ENCODE measurements at regions of chr9 and their contacts with region 1.

Region 1: GRCh38 chr9:33320568-33321261 is 30.4 kb downstream of the NFX1 start:
- DNase-seq: no peak
- ATAC-seq: no peak
- H3K4me3 ChIP-seq: no peak overlapping the region
- H3K4me3 Mint-ChIP-seq: no peak overlapping the region
- H3K27ac ChIP-seq: no peak overlapping the region
- H3K27ac Mint-ChIP-seq: peak overlapping the region; percentile 27
- H3K4me1 ChIP-seq: no peaks in the 10 kb centered on the region
- H3K4me1 Mint-ChIP-seq: no peaks in the 10 kb centered on the region
- H3K27me3 ChIP-seq: no peaks in the 10 kb centered on the region
- H3K27me3 Mint-ChIP-seq: no peaks in the 10 kb centered on the region
- CTCF ChIP-seq: no peak

Region 2: GRCh38 chr9:33249087-33249657 is 71.5 kb before region 1 on chr9:
- CTCF ChIA-PET with region 1: no interaction called
- POLR2A ChIA-PET with region 1: no interaction called
- intact Hi-C with region 1: no loop called
- DNase-seq: peak in 1 of 9 experiments; percentile 19
- ATAC-seq: no peak
- H3K4me3 ChIP-seq: no peak overlapping the region
- H3K4me3 Mint-ChIP-seq: no peak overlapping the region
- H3K27ac ChIP-seq: no peak overlapping the region
- H3K27ac Mint-ChIP-seq: no peak overlapping the region
- H3K4me1 ChIP-seq: no peaks in the 10 kb centered on the region
- H3K4me1 Mint-ChIP-seq: no peaks in the 10 kb centered on the region
- H3K27me3 ChIP-seq: no peaks in the 10 kb centered on the region
- H3K27me3 Mint-ChIP-seq: no peaks in the 10 kb centered on the region
- CTCF ChIP-seq: no peak

Region 3: DNA sequence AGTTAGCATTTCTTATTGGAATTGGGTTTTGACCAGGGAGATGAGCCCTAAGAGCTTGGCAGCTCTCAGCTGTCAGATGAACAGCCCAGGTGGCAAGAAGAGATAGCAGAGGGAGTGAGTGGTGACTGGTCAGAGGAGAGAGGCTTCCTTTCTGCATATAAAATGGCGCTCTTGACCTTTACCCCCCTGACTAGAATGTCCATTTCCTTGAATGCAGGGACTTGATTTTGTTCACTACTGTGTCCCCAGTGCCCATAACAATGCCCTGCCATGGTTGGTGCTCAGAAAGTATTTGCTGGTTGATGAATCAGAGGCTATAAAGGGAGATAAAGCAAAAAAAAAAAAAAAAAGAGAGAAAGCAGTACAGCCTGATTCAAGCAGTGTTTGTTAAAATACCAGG is 48.7 kb before region 1 on chr9:
- CTCF ChIA-PET with region 1: no interaction called
- POLR2A ChIA-PET with region 1: no interaction called
- intact Hi-C with region 1: loop called in 1 of 2 experiments (anchors 10 kb)
- DNase-seq: no peak
- ATAC-seq: no peak
- H3K4me3 ChIP-seq: no peak overlapping the region
- H3K4me3 Mint-ChIP-seq: no peak overlapping the region
- H3K27ac ChIP-seq: no peak overlapping the region
- H3K27ac Mint-ChIP-seq: peak overlapping the region; percentile 5
- H3K4me1 ChIP-seq: no peaks in the 10 kb centered on the region
- H3K4me1 Mint-ChIP-seq: peaks cover 22% of the 10 kb centered on the region
- H3K27me3 ChIP-seq: no peaks in the 10 kb centered on the region
- H3K27me3 Mint-ChIP-seq: no peaks in the 10 kb centered on the region
- CTCF ChIP-seq: no peak

Region 4: GRCh38 chr9:33350310-33350709 is 29.6 kb after region 1 on chr9:
- CTCF ChIA-PET with region 1: no interaction called
- POLR2A ChIA-PET with region 1: no interaction called
- intact Hi-C with region 1: no loop called
- DNase-seq: no peak
- ATAC-seq: no peak
- H3K4me3 ChIP-seq: no peak overlapping the region
- H3K4me3 Mint-ChIP-seq: no peak overlapping the region
- H3K27ac ChIP-seq: no peak overlapping the region
- H3K27ac Mint-ChIP-seq: peak overlapping the region; percentile 52
- H3K4me1 ChIP-seq: no peaks in the 10 kb centered on the region
- H3K4me1 Mint-ChIP-seq: no peaks in the 10 kb centered on the region
- H3K27me3 ChIP-seq: no peaks in the 10 kb centered on the region
- H3K27me3 Mint-ChIP-seq: no peaks in the 10 kb centered on the region
- CTCF ChIP-seq: no peak

Region 5: GRCh38 chr9:33535541-33535940 is 214.8 kb after region 1 on chr9:
- CTCF ChIA-PET with region 1: no interaction called
- POLR2A ChIA-PET with region 1: no interaction called
- intact Hi-C with region 1: no loop called
- DNase-seq: no peak
- ATAC-seq: no peak
- H3K4me3 ChIP-seq: no peak overlapping the region
- H3K4me3 Mint-ChIP-seq: no peak overlapping the region
- H3K27ac ChIP-seq: no peak overlapping the region
- H3K27ac Mint-ChIP-seq: no peak overlapping the region
- H3K4me1 ChIP-seq: no peaks in the 10 kb centered on the region
- H3K4me1 Mint-ChIP-seq: no peaks in the 10 kb centered on the region
- H3K27me3 ChIP-seq: no peaks in the 10 kb centered on the region
- H3K27me3 Mint-ChIP-seq: peaks cover 7% of the 10 kb centered on the region
- CTCF ChIP-seq: no peak